ENCODE measurements at regions of chr16 and their contacts with region 1.

Region 1: DNA sequence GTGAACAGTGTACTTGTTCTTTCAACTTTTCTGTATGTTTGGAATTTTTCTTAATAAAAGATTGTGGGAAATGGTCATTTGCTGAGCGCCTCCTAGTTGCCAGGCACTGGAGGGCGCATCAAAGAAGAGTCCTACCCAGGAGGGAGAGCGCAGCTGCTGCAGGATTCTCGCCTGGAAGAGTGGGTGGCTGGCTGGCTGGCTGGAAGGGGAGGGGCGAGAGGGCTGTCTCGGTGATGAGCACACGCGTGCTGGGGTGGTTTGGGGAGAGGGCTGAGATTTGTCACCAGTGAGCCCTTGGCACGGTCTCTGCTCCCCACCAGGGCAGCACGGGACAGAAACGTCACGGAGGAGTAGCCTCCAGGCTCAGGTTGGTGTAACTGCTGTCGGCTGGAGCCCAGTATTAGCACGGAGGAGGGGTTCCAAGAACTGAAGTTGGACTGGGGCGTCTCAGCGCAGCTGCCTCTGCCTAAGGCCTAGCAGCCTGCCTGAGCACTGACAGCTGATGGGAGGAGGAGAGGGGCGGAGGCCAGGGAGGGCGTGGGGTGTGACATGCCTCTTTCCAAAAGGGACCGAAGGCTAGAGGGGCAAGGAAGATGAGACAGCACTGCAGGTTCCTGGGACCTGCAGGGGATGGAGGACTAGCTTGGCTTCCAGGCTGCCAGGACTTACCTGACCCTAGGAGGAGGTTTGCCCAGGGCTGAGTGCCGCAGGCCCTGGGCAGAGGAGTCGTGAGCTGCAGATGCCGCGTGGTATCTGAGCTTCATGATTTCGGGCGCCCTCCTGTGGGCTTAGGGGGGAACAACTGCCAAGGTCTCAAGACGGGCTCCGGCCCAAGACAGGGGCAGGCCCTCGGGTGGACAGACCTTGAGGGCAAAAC is 5.7 kb downstream of the LDHD start:
- DNase-seq: peak; percentile 75
- H3K4me3 Mint-ChIP-seq: peak overlapping the region; percentile 64
- H3K27ac Mint-ChIP-seq: peak overlapping the region; percentile 85
- H3K4me1 Mint-ChIP-seq: peaks cover 42% of the 10 kb centered on the region
- H3K27me3 Mint-ChIP-seq: no peaks in the 10 kb centered on the region

Region 2: GRCh38 chr16:74813109-74813641 is 297.7 kb before region 1 on chr16:
- intact Hi-C with region 1: loop called (anchors 1 kb)
- DNase-seq: peak; percentile 60
- H3K4me3 Mint-ChIP-seq: no peak overlapping the region
- H3K27ac Mint-ChIP-seq: no peak overlapping the region
- H3K4me1 Mint-ChIP-seq: no peaks in the 10 kb centered on the region
- H3K27me3 Mint-ChIP-seq: no peaks in the 10 kb centered on the region

Region 3: GRCh38 chr16:74984535-74985296 is 126.2 kb before region 1 on chr16 and contains the start of gene WDR59:
- intact Hi-C with region 1: loop called (anchors 1 kb)
- DNase-seq: peak; percentile 99
- H3K4me3 Mint-ChIP-seq: peak within 1 kb of the TSS; percentile 91
- H3K27ac Mint-ChIP-seq: peak within 1 kb of the TSS; percentile 92
- H3K4me1 Mint-ChIP-seq: peaks cover 7% of the 10 kb centered on the region
- H3K27me3 Mint-ChIP-seq: no peaks in the 10 kb centered on the region
- total RNA-seq, gene WDR59: 83.9 and 92.0 TPM in 2 replicates

Region 4: DNA sequence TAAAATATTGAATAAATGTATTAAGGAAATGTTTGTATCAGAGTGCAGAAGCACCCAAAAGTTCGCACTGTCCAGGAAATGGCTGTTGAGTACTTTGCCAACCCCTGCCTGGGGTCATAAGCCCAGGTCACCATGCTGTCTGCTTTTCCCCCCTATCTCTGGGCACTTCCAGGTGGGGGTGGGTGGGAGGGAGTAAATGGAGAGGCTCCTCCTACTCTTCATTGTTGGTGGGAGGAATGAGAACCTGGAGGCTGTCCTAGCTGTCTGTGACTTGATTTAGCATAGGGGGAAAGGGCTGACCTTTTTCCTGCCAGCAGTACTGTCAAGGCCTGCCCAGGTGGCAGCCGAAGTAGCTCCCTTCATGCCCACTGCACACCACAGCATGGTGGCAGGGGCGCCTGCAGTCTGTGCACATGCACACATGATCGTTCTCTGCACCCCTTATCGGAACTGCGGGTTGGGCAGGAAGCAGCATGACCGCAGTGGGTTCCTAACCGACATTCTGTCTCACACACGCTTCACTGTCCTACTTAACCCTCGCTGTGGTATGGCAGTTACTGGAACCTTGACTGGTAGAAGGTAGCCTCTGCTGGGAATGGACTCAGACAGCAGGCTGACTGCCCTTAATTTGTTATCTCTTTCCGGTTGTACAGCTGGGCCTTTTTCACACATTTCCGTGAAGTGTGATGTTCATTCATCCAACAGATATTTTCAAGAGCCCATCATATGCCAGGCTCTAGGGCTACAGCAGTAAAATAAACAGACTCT is 35.8 kb before region 1 on chr16:
- intact Hi-C with region 1: loop called (anchors 1 kb)
- DNase-seq: peak; percentile 84
- H3K4me3 Mint-ChIP-seq: peak overlapping the region; percentile 69
- H3K27ac Mint-ChIP-seq: peak overlapping the region; percentile 90
- H3K4me1 Mint-ChIP-seq: peaks cover 55% of the 10 kb centered on the region
- H3K27me3 Mint-ChIP-seq: no peaks in the 10 kb centered on the region

Region 5: DNA sequence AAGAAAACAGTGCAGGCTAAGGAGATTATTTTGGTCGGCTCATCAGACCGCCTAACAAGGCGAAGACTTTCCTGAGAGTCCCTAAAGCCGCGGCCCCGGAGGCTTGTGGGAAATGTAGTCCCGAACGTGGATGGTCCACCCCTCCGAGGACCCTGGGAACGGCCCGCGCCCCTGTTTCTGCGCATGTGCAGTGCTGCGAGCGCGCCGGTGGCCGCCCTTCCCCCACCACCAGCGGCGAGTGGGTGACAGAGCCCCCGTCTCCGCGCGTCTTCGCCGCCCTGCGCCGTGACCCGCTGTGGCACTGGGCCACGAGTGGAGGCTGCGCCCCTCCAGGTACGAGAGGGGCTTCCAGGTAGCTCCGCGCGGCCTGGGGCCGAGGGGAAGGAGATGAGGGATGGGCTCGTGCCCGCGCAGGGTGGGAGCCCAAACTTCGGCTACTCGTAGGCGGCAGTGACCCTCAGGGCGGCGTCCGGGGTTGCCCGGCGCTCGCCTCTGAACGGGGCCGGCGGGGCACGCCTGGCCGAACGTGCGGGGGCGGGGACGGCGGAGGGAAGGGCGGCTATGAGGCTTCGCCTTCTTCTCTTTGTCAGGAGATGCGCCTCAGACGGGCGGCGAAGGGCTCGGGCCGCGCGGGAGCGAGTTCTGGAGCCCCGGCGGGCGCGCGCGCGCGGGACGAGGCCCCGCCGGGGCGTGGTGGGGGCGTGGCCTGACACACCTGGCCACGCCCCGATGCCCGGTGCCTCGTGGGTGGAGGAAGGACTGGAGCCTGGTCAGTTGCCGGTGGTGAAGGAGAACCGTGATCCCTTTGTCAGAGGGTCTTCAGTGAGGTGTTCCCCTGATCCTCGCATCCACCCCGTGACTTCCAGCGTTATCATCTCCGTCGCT is 37.7 kb after region 1 on chr16 and contains the start of gene ZFP1:
- intact Hi-C with region 1: loop called (anchors 1 kb)
- DNase-seq: peak; percentile 90
- H3K4me3 Mint-ChIP-seq: peak within 1 kb of the TSS; percentile 87
- H3K27ac Mint-ChIP-seq: peak within 1 kb of the TSS; percentile 77
- H3K4me1 Mint-ChIP-seq: peaks cover 14% of the 10 kb centered on the region
- H3K27me3 Mint-ChIP-seq: no peaks in the 10 kb centered on the region
- total RNA-seq, gene ZFP1: 11.2 and 14.0 TPM in 2 replicates

Measured in activated T-helper 2 cell treated with anti-CD3 and anti-CD28 coated beads, Interferon-gamma antibody, Interleukin-2, Interleukin-4, amounts not matched to agents 10 μg/mL and 5 μg/mL and 100 μg/mL, durations not matched to agents 14 hours and 24 hours and 36 hours (primary cell).